Colonic mucosa (tissue), 4 donors: ENCODE measurements at regions of chr9 and their contacts with region 1.

Region 1: DNA sequence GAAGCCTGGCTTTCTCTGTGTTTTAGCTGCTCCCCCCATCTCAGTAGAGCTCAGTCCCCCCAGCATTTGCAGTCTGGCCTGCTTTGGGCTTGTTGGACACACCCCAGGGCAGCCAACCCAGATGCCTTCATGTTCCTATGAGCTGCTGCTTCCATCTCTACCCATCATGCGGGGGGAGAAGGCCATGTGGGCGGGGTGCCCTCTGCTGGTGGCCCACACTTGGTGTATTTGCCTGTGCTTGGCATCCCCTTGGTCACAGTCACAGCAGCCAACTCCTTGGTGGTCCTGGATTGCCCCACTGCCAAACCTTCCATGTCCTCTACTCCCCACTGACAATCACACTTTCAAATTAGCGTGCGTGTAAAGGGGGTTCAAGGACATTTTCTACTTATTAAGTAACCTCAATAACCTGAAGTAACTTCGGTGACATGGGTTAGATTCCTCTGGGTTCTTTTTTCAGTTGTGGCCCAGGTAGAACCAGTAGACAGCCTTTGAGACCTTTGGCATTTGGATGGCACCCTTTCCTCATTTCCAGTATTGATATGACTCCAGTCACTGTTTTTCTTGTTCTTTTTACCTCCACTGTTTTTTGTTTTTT is 42.8 kb downstream of the SNX30 start:
- DNase-seq: peak; percentile 81
- H3K4me3 ChIP-seq: no peak overlapping the region
- H3K27ac ChIP-seq: no peak overlapping the region
- H3K4me1 ChIP-seq: no peaks in the 10 kb centered on the region
- H3K27me3 ChIP-seq: no peaks in the 10 kb centered on the region
- CTCF ChIP-seq: peak; percentile 61

Region 2: GRCh38 chr9:112717661-112718341 is 75.5 kb before region 1 on chr9 and contains the start of gene INIP:
- intact Hi-C with region 1: loop called (anchors 10 kb)
- DNase-seq: peak; percentile 97
- H3K4me3 ChIP-seq: peak within 1 kb of the TSS; percentile 64
- H3K27ac ChIP-seq: peak within 1 kb of the TSS; percentile 82
- H3K4me1 ChIP-seq: no peaks in the 10 kb centered on the region
- H3K27me3 ChIP-seq: no peaks in the 10 kb centered on the region
- CTCF ChIP-seq: no peak
- total RNA-seq, gene INIP: 26.1 to 36.1 TPM